ENCODE measurements at regions of chr16 and their contacts with region 1.

Region 1: GRCh38 chr16:11530171-11530940 is 56.4 kb downstream of the LITAF start:
- DNase-seq: no peak
- H3K4me3 ChIP-seq: no peak overlapping the region
- H3K27ac ChIP-seq: no peak overlapping the region
- H3K4me1 ChIP-seq: peaks cover 0 to 10% (median 3%) of the 10 kb centered on the region in 4 experiments; a peak in 4 of 7 replicates
- H3K27me3 ChIP-seq: no peaks in the 10 kb centered on the region
- CTCF ChIP-seq: no peak
- EP300 ChIP-seq: no peak
- POLR2A ChIP-seq: no peak
- RAD21 ChIP-seq: no peak

Region 2: GRCh38 chr16:11386791-11387546 is 143.4 kb before region 1 on chr16:
- CTCF ChIA-PET with region 1: interaction called, 11 read pairs
- POLR2A ChIA-PET with region 1: no interaction called
- DNase-seq: peak; percentile 41 to 92
- H3K4me3 ChIP-seq: no peak overlapping the region
- H3K27ac ChIP-seq: no peak overlapping the region
- H3K4me1 ChIP-seq: peaks cover 0 to 29% (median 14%) of the 10 kb centered on the region in 4 experiments; a peak in 5 of 7 replicates
- H3K27me3 ChIP-seq: no peaks in the 10 kb centered on the region
- CTCF ChIP-seq: peak; percentile 86 to 88 (median 86)
- EP300 ChIP-seq: no peak
- POLR2A ChIP-seq: no peak
- RAD21 ChIP-seq: peak; percentile 64 to 76

Region 3: GRCh38 chr16:11554053-11554452 is 23.7 kb after region 1 on chr16:
- CTCF ChIA-PET with region 1: interaction called, 20 read pairs
- POLR2A ChIA-PET with region 1: no interaction called
- DNase-seq: no peak
- H3K4me3 ChIP-seq: no peak overlapping the region
- H3K27ac ChIP-seq: no peak overlapping the region
- H3K4me1 ChIP-seq: no peaks in the 10 kb centered on the region
- H3K27me3 ChIP-seq: no peaks in the 10 kb centered on the region; a peak in 1 of 7 replicates
- CTCF ChIP-seq: no peak
- EP300 ChIP-seq: no peak
- POLR2A ChIP-seq: no peak
- RAD21 ChIP-seq: no peak

Region 4: GRCh38 chr16:11586856-11587642 is 56.7 kb after region 1 on chr16 and contains the start of gene LITAF:
- CTCF ChIA-PET with region 1: interaction called, 24 read pairs
- POLR2A ChIA-PET with region 1: interaction called, 3 read pairs
- DNase-seq: peak; percentile 9 to 79
- H3K4me3 ChIP-seq: peak within 1 kb of the TSS; percentile 49 to 87 (median 63)
- H3K27ac ChIP-seq: no peak within 1 kb of the TSS; the same call in 1 of the 2 replicates
- H3K4me1 ChIP-seq: peaks cover 12 to 29% (median 25%) of the 10 kb centered on the region in 4 experiments
- H3K27me3 ChIP-seq: peaks cover 4 to 21% (median 13%) of the 10 kb centered on the region in 4 experiments
- CTCF ChIP-seq: peak in 1 of 3 experiments; percentile 22; a peak in 1 of 4 replicates
- EP300 ChIP-seq: no peak
- POLR2A ChIP-seq: no peak
- RAD21 ChIP-seq: peak; percentile 46 to 49; a peak in 3 of 4 replicates
- total RNA-seq, gene LITAF: 160 and 165 TPM in 2 replicates

Region 5: DNA sequence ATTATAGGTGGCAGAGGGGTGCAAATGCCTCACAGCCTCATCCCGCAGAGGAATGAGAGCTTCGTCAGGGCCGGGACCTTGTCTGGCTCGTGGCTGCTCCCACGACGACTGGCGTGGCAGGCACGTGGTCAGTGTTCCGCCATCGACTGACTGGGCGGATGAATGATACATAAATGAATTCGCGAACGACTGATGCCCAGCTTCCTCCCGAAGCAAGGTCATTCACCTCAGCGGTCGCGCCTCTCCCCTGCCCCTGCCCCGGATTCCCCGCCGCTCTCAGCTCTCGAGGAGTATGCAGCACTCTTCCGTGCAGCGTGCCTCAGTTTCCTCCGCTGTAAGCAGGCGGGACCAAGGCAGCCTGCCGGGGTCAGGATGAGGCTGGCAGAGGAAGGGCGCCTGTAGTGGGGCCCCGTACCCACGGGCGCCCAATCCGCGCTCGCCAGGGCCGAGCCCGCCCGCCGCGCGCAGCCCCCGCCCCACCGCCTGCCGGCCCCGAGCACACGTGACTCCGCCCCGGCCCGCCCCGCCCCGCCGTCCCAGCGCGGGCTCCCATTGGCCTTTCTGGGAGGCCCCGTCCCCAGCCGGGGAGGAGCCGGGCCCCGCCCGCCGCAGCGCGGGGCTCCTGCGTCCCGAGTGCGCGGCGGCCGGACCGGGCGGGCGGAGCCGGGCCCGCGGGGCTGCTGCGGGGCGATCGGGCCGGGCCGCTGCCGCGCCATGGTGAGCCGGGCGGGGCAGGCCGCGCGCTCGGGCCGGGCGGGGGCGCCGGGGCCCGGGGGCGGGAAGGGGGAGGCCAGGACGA is 137.7 kb after region 1 on chr16 and contains the start of gene SNN:
- CTCF ChIA-PET with region 1: interaction called, 23 read pairs
- POLR2A ChIA-PET with region 1: interaction called, 6 read pairs
- DNase-seq: peak in 1 of 2 experiments; percentile 86
- H3K4me3 ChIP-seq: peak within 1 kb of the TSS; percentile 67 to 78 (median 71)
- H3K27ac ChIP-seq: no peak within 1 kb of the TSS
- H3K4me1 ChIP-seq: peaks cover 5 to 38% (median 28%) of the 10 kb centered on the region in 4 experiments
- H3K27me3 ChIP-seq: peaks cover 0 to 4% (median 0%) of the 10 kb centered on the region in 4 experiments; a peak in 1 of 7 replicates
- CTCF ChIP-seq: no peak
- EP300 ChIP-seq: no peak
- POLR2A ChIP-seq: peak in 1 of 2 experiments; percentile 53; a peak in 1 of 3 replicates
- RAD21 ChIP-seq: no peak
- total RNA-seq, gene SNN: 60.6 and 66.9 TPM in 2 replicates

Measured in H1 (cell line).